ENCODE measurements at regions of chr1 and their contacts with region 1.

Region 1: DNA sequence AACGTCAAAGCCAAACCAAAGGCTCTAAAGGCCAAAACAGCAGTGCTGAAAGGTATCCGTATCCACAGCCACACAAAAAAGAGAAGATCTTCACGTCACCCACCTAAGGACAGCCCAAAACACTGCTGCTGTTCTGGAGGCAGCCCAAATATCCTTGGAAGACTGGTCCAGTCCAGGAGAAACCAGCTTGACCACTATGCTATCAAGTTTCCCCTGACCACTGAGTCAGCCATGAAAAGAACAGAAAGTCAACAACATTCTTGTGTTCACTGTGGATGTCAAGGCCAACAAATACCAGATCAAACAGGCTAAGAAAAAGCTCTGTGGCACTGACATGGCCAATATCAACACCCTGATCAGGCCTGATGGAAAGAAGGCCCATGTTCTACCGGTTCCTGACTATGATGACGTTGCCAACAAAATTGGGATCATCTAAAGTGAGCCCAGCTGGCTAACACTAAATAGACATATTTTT is 32.0 kb downstream of the ARID4B start:
- DNase-seq: peak; percentile 62
- H3K4me3 Mint-ChIP-seq: peak overlapping the region; percentile 37
- H3K27ac Mint-ChIP-seq: peak overlapping the region; percentile 81
- H3K4me1 Mint-ChIP-seq: peaks cover 46% of the 10 kb centered on the region
- H3K27me3 Mint-ChIP-seq: no peaks in the 10 kb centered on the region
- CTCF ChIP-seq: no peak

Region 2: DNA sequence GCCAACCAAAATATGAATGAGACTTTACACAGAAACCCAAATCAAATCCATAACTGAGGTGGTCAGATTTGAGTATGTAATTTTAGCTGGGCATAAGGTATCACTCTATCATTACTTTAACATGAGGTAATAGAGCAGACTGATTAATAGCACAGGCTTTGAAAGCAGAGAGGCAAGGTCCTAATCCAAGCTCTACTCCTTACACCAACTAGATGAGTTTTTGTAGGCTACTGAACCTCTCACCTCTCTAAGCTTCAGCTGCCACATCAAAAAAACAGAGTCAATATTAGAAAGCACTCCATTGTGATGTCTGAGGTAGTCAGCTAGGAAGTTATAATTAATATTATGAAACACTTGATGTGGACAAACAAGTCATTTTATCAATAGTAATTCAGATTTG is 31.6 kb before region 1 on chr1:
- CTCF ChIA-PET with region 1: interaction called, 3 read pairs
- intact Hi-C with region 1: loop called (anchors 5 kb)
- DNase-seq: no peak
- H3K4me3 Mint-ChIP-seq: no peak overlapping the region
- H3K27ac Mint-ChIP-seq: no peak overlapping the region
- H3K4me1 Mint-ChIP-seq: peaks cover 8% of the 10 kb centered on the region
- H3K27me3 Mint-ChIP-seq: no peaks in the 10 kb centered on the region
- CTCF ChIP-seq: no peak

Region 3: DNA sequence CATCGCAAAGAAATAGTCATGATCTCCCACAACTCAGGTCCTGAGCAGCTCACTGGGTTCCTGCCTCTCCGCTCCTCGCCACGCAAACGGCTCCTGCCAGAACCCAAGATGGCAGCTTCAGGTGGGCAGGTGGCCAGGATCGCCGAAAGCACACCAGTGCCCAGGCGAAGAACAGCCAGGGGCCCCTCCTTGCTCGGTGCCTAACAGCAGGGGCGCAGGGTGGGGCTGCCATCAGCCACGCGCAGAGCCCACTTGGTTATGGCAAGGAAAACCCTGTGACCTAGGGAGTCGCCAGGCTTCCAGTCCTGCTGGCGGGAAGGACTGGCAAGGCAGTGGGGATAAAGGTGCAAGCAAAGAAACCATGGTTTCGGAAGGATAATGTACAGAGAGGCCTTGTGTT is 15.5 kb before region 1 on chr1:
- CTCF ChIA-PET with region 1: no interaction called
- intact Hi-C with region 1: loop called (anchors 2 kb)
- DNase-seq: no peak
- H3K4me3 Mint-ChIP-seq: no peak overlapping the region
- H3K27ac Mint-ChIP-seq: no peak overlapping the region
- H3K4me1 Mint-ChIP-seq: peaks cover 20% of the 10 kb centered on the region
- H3K27me3 Mint-ChIP-seq: no peaks in the 10 kb centered on the region
- CTCF ChIP-seq: no peak